K562 (cell line): ENCODE measurements at regions of chr15 and their contacts with region 1.

Region 1: GRCh38 chr15:59138243-59138642 is 33.3 kb downstream of the CCNB2 start:
- DNase-seq: peak; percentile 87 to 92 (median 91)
- ATAC-seq: peak; percentile 100
- H3K4me3 ChIP-seq: no peak overlapping the region
- H3K27ac ChIP-seq: peak overlapping the region; percentile 56; the same call in 2 of the 3 replicates
- H3K4me1 ChIP-seq: peaks cover 0 to 3% of the 10 kb centered on the region in 2 experiments; a peak in 1 of 5 replicates
- H3K27me3 ChIP-seq: no peaks in the 10 kb centered on the region
- CTCF ChIP-seq: peak; percentile 99
- EP300 ChIP-seq: peak; percentile 29; the same call in 1 of the 2 replicates
- POLR2A ChIP-seq: no peak
- RAD21 ChIP-seq: peak; percentile 83 to 90

Region 2: DNA sequence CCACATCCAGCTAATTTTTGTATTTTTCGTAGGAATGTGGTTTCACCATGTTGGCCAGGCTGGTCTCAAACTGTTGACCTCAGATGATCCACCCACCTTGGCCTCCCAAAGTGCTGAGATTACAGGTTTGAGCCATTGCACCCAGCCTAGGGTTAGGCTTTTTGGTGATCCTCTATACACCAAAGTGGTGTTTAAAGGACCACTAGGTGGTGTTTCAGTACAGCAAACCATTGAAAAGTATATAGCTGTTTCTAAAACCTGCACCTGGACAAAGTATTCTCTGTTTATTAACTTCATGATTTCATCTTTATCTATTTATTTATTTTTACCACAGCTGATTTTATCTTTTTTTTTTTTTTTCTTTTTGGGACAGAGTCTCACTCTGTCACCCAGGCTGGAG is 298.8 kb before region 1 on chr15:
- CTCF ChIA-PET with region 1: no interaction called
- POLR2A ChIA-PET with region 1: no interaction called
- in situ Hi-C with region 1: no loop called
- intact Hi-C with region 1: loop called (anchors 2 kb)
- DNase-seq: peak in 3 of 4 experiments; percentile 12 to 36 (median 25)
- ATAC-seq: peak; percentile 82
- H3K4me3 ChIP-seq: no peak overlapping the region
- H3K27ac ChIP-seq: no peak overlapping the region
- H3K4me1 ChIP-seq: peaks cover 10 to 13% of the 10 kb centered on the region in 2 experiments; a peak in 4 of 5 replicates
- H3K27me3 ChIP-seq: no peaks in the 10 kb centered on the region
- CTCF ChIP-seq: peak in 2 of 3 experiments; percentile 27 to 59; a peak in 4 of 6 replicates
- EP300 ChIP-seq: no peak
- POLR2A ChIP-seq: no peak
- RAD21 ChIP-seq: peak in 1 of 2 experiments; percentile 54; a peak in 2 of 4 replicates

Region 3: GRCh38 chr15:58957101-58957973 is 180.9 kb before region 1 on chr15:
- CTCF ChIA-PET with region 1: no interaction called
- POLR2A ChIA-PET with region 1: no interaction called
- in situ Hi-C with region 1: no loop called
- intact Hi-C with region 1: loop called (anchors 1 kb)
- DNase-seq: peak; percentile 57 to 84 (median 59)
- ATAC-seq: peak; percentile 97
- H3K4me3 ChIP-seq: no peak overlapping the region
- H3K27ac ChIP-seq: no peak overlapping the region
- H3K4me1 ChIP-seq: peaks cover 0 to 7% of the 10 kb centered on the region in 2 experiments; a peak in 2 of 5 replicates
- H3K27me3 ChIP-seq: no peaks in the 10 kb centered on the region
- CTCF ChIP-seq: peak; percentile 89 to 98 (median 97)
- EP300 ChIP-seq: no peak
- POLR2A ChIP-seq: no peak
- RAD21 ChIP-seq: peak; percentile 35 to 81

Region 4: GRCh38 chr15:58980351-58980939 is 157.8 kb before region 1 on chr15:
- CTCF ChIA-PET with region 1: interaction called, 17 read pairs
- POLR2A ChIA-PET with region 1: no interaction called
- in situ Hi-C with region 1: no loop called
- intact Hi-C with region 1: loop called (anchors 1 kb)
- DNase-seq: peak in 2 of 4 experiments; percentile 20 to 40
- ATAC-seq: peak; percentile 57; the same call in 2 of the 3 replicates
- H3K4me3 ChIP-seq: no peak overlapping the region
- H3K27ac ChIP-seq: no peak overlapping the region
- H3K4me1 ChIP-seq: no peaks in the 10 kb centered on the region
- H3K27me3 ChIP-seq: no peaks in the 10 kb centered on the region
- CTCF ChIP-seq: peak in 2 of 3 experiments; percentile 25 to 74; a peak in 4 of 6 replicates
- EP300 ChIP-seq: no peak
- POLR2A ChIP-seq: no peak
- RAD21 ChIP-seq: peak; percentile 75 to 82